CD4-positive, alpha-beta T cell (primary cell): ENCODE measurements at regions of chr10 and their contacts with region 1.

Region 1: DNA sequence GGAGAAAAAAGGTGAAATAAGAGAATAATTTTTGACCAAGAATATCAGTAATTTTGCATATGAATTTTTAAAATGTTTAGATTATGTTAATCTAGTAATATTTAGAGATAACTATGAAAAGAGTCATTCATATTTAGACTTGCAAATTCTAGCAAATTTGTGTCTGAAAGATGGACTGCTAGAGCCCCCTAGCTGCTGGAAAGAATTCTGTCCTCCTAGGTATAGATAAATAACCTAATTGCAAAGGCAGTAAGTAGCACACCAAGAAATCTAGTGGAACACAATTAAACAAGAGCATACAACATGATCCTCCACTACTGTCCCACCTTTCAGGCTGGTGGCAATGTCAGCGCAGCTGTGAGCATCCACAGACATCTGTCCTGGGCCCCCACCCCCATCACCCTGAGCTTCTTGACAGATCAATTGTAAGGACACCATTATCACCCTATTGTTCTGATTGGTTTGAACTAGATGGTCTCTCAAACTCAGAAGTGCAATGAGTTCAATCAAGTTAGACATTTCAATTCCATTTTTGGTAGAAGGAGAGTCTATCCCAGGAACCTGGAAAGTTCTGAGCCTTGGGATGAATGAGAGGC is 15.0 kb upstream of the GFRA1 start:
- DNase-seq: peak in 1 of 14 experiments; percentile 15
- ATAC-seq: no peak
- H3K4me3 ChIP-seq: no peak overlapping the region
- H3K4me3 Mint-ChIP-seq: no peak overlapping the region
- H3K27ac ChIP-seq: no peak overlapping the region
- H3K27ac Mint-ChIP-seq: no peak overlapping the region
- H3K4me1 ChIP-seq: no peaks in the 10 kb centered on the region
- H3K4me1 Mint-ChIP-seq: no peaks in the 10 kb centered on the region
- H3K27me3 ChIP-seq: no peaks in the 10 kb centered on the region
- H3K27me3 Mint-ChIP-seq: peaks cover 8% of the 10 kb centered on the region
- CTCF ChIP-seq: no peak

Region 2: DNA sequence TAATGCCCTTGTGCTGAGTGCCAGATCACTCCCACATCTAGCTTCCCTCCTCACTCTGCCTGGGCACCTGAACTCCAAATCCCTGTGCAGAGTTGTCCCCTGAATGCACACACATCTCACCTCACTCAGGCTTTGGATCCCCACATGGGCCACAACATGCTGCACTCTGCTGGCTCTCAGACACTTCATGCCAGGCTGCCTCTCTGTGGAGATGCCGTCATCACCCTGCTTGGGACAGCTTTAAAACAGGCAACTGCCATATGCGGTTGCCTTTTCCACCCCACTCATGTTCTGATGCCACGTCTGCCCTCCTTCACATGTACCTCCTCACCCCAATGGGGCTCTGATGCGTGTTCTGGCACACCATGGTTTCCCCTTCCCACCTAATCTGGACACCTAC is 492.0 kb before region 1 on chr10:
- CTCF ChIA-PET with region 1: no interaction called
- POLR2A ChIA-PET with region 1: no interaction called
- intact Hi-C with region 1: loop called in 1 of 2 experiments (anchors 5 kb)
- DNase-seq: no peak
- ATAC-seq: no peak
- H3K4me3 ChIP-seq: no peak overlapping the region
- H3K4me3 Mint-ChIP-seq: no peak overlapping the region
- H3K27ac ChIP-seq: no peak overlapping the region
- H3K27ac Mint-ChIP-seq: no peak overlapping the region
- H3K4me1 ChIP-seq: no peaks in the 10 kb centered on the region
- H3K4me1 Mint-ChIP-seq: no peaks in the 10 kb centered on the region
- H3K27me3 ChIP-seq: no peaks in the 10 kb centered on the region
- H3K27me3 Mint-ChIP-seq: peaks cover under 1% of the 10 kb centered on the region
- CTCF ChIP-seq: no peak

Region 3: GRCh38 chr10:116324227-116324950 is 36.4 kb after region 1 on chr10 and contains the start of gene CCDC172:
- CTCF ChIA-PET with region 1: no interaction called
- POLR2A ChIA-PET with region 1: no interaction called
- intact Hi-C with region 1: no loop called
- DNase-seq: no peak
- ATAC-seq: no peak
- H3K4me3 ChIP-seq: no peak within 1 kb of the TSS
- H3K4me3 Mint-ChIP-seq: no peak within 1 kb of the TSS
- H3K27ac ChIP-seq: no peak within 1 kb of the TSS
- H3K27ac Mint-ChIP-seq: no peak within 1 kb of the TSS
- H3K4me1 ChIP-seq: no peaks in the 10 kb centered on the region
- H3K4me1 Mint-ChIP-seq: no peaks in the 10 kb centered on the region
- H3K27me3 ChIP-seq: no peaks in the 10 kb centered on the region
- H3K27me3 Mint-ChIP-seq: peaks cover 10% of the 10 kb centered on the region
- CTCF ChIP-seq: no peak
- total RNA-seq, gene CCDC172: not detected

Region 4: GRCh38 chr10:116353817-116354216 is 65.8 kb after region 1 on chr10:
- CTCF ChIA-PET with region 1: no interaction called
- POLR2A ChIA-PET with region 1: no interaction called
- intact Hi-C with region 1: no loop called
- DNase-seq: no peak
- ATAC-seq: no peak
- H3K4me3 ChIP-seq: no peak overlapping the region
- H3K4me3 Mint-ChIP-seq: no peak overlapping the region
- H3K27ac ChIP-seq: no peak overlapping the region
- H3K27ac Mint-ChIP-seq: no peak overlapping the region
- H3K4me1 ChIP-seq: no peaks in the 10 kb centered on the region
- H3K4me1 Mint-ChIP-seq: no peaks in the 10 kb centered on the region
- H3K27me3 ChIP-seq: no peaks in the 10 kb centered on the region
- H3K27me3 Mint-ChIP-seq: no peaks in the 10 kb centered on the region
- CTCF ChIP-seq: no peak